MCF 10A (cell line): ENCODE measurements at regions of chr1 and their contacts with region 1.

Region 1: GRCh38 chr1:204363335-204364124 is 3.8 kb upstream of the PLEKHA6 start:
- DNase-seq: peak; percentile 92
- H3K4me3 Mint-ChIP-seq: peak overlapping the region; percentile 66
- H3K27ac Mint-ChIP-seq: peak overlapping the region; percentile 58
- H3K4me1 Mint-ChIP-seq: peaks cover 12% of the 10 kb centered on the region
- H3K27me3 Mint-ChIP-seq: no peaks in the 10 kb centered on the region
- CTCF ChIP-seq: peak; percentile 100

Region 2: GRCh38 chr1:203861379-203862184 is 501.9 kb before region 1 on chr1 and contains the start of gene SNRPE:
- CTCF ChIA-PET with region 1: interaction called, 9 read pairs
- POLR2A ChIA-PET with region 1: interaction called, 5 read pairs
- intact Hi-C with region 1: loop called (anchors 1 kb)
- DNase-seq: peak; percentile 100
- H3K4me3 Mint-ChIP-seq: peak within 1 kb of the TSS; percentile 100
- H3K27ac Mint-ChIP-seq: peak within 1 kb of the TSS; percentile 100
- H3K4me1 Mint-ChIP-seq: peaks cover 43% of the 10 kb centered on the region
- H3K27me3 Mint-ChIP-seq: no peaks in the 10 kb centered on the region
- CTCF ChIP-seq: peak; percentile 100
- total RNA-seq, gene SNRPE: 358 and 423 TPM in 2 replicates

Region 3: DNA sequence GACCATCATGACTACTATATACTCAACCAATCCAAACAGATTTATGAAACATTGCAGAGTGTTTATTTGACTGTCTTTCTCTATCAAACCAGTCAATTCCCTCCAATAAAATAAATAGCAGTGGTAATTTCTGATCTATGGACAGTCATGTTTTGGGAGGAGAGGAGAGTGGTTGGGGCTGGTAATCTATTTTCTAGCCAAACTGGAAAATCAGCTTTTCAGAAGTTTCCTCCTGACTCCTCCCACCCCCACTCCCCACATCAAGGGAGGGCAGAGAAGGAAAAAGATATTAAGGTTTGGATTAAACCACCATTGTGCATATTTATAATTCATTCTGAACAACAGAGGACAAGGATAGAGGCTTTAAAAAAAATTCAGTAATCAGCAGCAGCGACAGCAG is 360.0 kb before region 1 on chr1:
- CTCF ChIA-PET with region 1: no interaction called
- POLR2A ChIA-PET with region 1: no interaction called
- intact Hi-C with region 1: no loop called
- DNase-seq: no peak
- H3K4me3 Mint-ChIP-seq: no peak overlapping the region
- H3K27ac Mint-ChIP-seq: no peak overlapping the region
- H3K4me1 Mint-ChIP-seq: peaks cover 4% of the 10 kb centered on the region
- H3K27me3 Mint-ChIP-seq: no peaks in the 10 kb centered on the region
- CTCF ChIP-seq: no peak

Region 4: GRCh38 chr1:204162231-204163074 is 201.1 kb before region 1 on chr1:
- CTCF ChIA-PET with region 1: interaction called, 312 read pairs
- POLR2A ChIA-PET with region 1: interaction called, 10 read pairs
- intact Hi-C with region 1: loop called (anchors 1 kb)
- DNase-seq: peak; percentile 95
- H3K4me3 Mint-ChIP-seq: no peak overlapping the region
- H3K27ac Mint-ChIP-seq: no peak overlapping the region
- H3K4me1 Mint-ChIP-seq: peaks cover 6% of the 10 kb centered on the region
- H3K27me3 Mint-ChIP-seq: no peaks in the 10 kb centered on the region
- CTCF ChIP-seq: peak; percentile 100

Region 5: GRCh38 chr1:204207136-204207616 is 156.4 kb before region 1 on chr1:
- CTCF ChIA-PET with region 1: interaction called, 56 read pairs
- POLR2A ChIA-PET with region 1: no interaction called
- intact Hi-C with region 1: no loop called
- DNase-seq: peak; percentile 76
- H3K4me3 Mint-ChIP-seq: no peak overlapping the region
- H3K27ac Mint-ChIP-seq: no peak overlapping the region
- H3K4me1 Mint-ChIP-seq: no peaks in the 10 kb centered on the region
- H3K27me3 Mint-ChIP-seq: peaks cover 38% of the 10 kb centered on the region
- CTCF ChIP-seq: peak; percentile 99

Region 6: DNA sequence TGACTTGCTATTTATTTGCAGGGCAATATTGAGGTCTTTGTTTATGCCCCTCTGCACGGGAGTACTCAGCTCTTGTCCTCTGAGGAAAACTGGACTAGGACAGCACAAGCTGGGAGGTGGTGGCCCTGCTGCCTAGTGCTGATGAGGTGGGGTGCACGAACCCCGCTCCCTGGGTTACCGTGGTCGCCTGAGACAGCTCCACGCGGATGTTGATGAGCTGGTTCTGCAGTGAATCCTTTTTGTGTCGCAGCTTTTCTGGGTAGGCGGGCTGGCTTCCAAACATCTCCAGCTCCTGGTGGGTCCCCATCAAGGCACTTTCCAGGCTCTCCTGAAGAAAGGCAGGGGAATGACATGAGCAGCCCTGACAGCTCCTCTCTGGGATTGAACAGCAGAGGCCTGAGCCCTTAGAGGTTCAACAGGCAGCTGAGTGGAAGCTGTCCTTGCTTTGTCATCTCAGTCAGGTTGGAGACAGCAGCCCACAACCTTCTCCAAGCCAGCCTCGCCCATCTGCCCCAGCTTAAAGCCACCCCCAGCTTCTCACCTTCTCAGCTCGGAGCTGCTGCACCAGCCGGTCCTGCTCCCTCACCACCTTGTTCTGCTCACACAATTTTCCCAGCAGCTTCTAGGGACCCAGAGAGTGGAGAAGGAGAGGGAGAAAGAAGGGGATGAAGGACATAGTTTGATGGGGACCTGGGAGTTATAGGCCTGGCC is 114.7 kb before region 1 on chr1:
- CTCF ChIA-PET with region 1: interaction called, 289 read pairs
- POLR2A ChIA-PET with region 1: interaction called, 9 read pairs
- intact Hi-C with region 1: no loop called
- DNase-seq: no peak
- H3K4me3 Mint-ChIP-seq: no peak overlapping the region
- H3K27ac Mint-ChIP-seq: no peak overlapping the region
- H3K4me1 Mint-ChIP-seq: no peaks in the 10 kb centered on the region
- H3K27me3 Mint-ChIP-seq: no peaks in the 10 kb centered on the region
- CTCF ChIP-seq: no peak

Region 7: DNA sequence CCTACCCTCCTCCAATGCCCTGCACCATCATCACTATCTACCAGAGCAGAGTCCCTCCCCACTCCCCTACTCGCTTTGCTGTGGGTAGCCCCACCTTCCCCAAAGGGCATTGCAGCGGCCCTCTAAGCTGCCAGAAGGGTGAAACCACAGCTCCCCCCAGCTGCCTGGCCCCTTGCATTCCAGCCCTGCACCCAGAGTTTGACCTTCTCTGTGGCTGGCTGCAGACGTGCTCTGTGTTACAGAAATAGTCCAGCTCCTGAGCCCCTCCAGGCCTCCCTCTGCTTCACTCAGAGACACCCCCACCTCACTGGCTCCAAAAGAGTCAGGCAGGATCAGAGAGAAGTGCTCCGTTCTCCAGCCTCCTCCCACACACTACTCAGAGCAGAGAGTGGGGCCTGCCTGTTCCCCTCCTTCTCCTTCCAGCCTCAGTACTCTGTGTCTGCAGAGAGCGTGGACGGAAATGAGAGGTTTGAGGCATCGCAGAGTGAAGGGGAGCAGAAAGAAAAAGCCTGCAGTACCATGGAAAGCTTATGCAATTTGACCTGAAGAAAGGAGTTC is 67.0 kb before region 1 on chr1:
- CTCF ChIA-PET with region 1: interaction called, 18 read pairs
- POLR2A ChIA-PET with region 1: interaction called, 15 read pairs
- intact Hi-C with region 1: no loop called
- DNase-seq: peak; percentile 62
- H3K4me3 Mint-ChIP-seq: peak overlapping the region; percentile 40
- H3K27ac Mint-ChIP-seq: peak overlapping the region; percentile 62
- H3K4me1 Mint-ChIP-seq: peaks cover 67% of the 10 kb centered on the region
- H3K27me3 Mint-ChIP-seq: no peaks in the 10 kb centered on the region
- CTCF ChIP-seq: no peak

Region 8: DNA sequence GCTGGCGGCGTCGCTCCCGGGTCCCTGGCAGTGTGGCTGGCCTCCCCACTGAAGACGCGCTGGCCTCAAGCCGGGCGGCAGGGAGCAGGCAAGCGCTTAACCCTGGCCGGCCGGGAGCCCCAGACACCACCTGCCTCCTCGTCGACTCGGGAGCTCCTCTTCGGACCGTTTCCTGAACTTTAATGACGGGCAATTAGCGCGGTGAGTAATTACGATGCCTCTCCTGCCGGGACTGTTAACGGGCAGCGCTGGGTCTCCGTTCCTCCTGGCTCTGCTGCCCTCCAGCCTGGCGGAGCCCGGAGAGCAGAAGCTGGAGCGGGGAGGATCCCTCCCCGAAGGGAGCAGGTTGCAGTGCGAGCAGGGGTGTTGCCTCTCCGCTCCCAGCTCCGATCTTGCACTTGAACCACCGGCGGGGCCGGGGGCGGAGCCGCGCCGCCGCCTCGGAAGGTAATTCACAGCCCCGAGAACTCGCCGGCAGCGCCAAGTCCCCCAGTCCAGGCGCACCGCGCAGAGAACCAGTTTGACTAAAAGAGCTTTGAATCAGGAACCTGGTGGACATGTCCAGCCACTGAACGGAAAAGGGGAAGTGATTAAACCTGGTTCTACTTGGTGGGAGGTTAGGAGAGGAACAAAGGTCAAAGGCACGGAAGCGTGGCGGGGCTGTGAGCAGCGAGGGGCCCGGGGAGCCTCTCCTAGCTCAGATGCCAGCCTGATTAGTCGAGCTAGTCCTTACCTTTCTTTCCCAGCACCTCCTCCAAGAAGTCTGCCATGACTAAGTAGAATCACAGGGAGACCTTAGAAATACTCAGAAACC is 14.5 kb after region 1 on chr1:
- CTCF ChIA-PET with region 1: interaction called, 117 read pairs
- POLR2A ChIA-PET with region 1: interaction called, 6 read pairs
- intact Hi-C with region 1: no loop called
- DNase-seq: peak; percentile 46
- H3K4me3 Mint-ChIP-seq: peak overlapping the region; percentile 70
- H3K27ac Mint-ChIP-seq: no peak overlapping the region
- H3K4me1 Mint-ChIP-seq: peaks cover 5% of the 10 kb centered on the region
- H3K27me3 Mint-ChIP-seq: no peaks in the 10 kb centered on the region
- CTCF ChIP-seq: no peak

Region 9: DNA sequence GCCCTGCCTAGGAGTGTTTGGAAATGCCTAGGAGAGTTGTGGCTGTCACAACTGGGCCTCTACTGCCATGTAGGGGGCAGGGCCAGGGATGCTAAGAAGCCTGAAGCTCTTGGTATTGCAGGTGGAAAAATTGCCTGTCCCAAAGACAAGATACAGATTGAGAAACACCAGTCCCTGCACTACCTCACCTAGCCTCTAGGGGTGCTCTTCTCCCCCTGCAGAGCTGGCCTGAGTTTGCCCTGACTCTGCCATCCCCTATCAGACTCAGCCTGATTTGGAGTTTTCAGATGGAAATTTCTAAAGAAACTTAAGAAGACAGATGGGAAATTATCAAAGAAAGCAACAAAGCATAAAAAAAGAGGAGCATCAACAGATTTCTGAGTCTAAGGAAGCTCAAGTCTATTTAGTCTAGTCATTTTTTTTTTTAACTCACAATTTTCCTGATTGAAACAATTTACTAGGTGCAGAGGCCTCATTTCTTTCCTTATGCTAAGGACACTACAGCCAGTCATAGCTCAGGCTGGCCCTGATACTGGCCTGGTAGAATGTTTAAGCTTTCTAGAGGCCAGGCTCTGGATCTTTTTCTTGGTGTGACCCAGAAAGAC is 383.4 kb after region 1 on chr1:
- CTCF ChIA-PET with region 1: no interaction called
- POLR2A ChIA-PET with region 1: no interaction called
- intact Hi-C with region 1: no loop called
- DNase-seq: peak; percentile 79
- H3K4me3 Mint-ChIP-seq: no peak overlapping the region
- H3K27ac Mint-ChIP-seq: no peak overlapping the region
- H3K4me1 Mint-ChIP-seq: no peaks in the 10 kb centered on the region
- H3K27me3 Mint-ChIP-seq: peaks cover 48% of the 10 kb centered on the region
- CTCF ChIP-seq: peak; percentile 99